Activated CD4-positive, alpha-beta T cell treated with anti-CD3 and anti-CD28 coated beads for 36 hours (primary cell): ENCODE measurements at regions of chr12 and their contacts with region 1.

Region 1: GRCh38 chr12:5083955-5084849 is 40.5 kb downstream of the KCNA5 start:
- DNase-seq: peak; percentile 29
- ATAC-seq: no peak
- H3K4me3 Mint-ChIP-seq: no peak overlapping the region
- H3K27ac Mint-ChIP-seq: no peak overlapping the region
- H3K4me1 Mint-ChIP-seq: no peaks in the 10 kb centered on the region
- H3K27me3 Mint-ChIP-seq: peaks cover 2% of the 10 kb centered on the region

Region 2: GRCh38 chr12:5022465-5023061 is 61.6 kb before region 1 on chr12:
- CTCF ChIA-PET with region 1: interaction called, 14 read pairs
- POLR2A ChIA-PET with region 1: no interaction called
- intact Hi-C with region 1: loop called (anchors 1 kb)
- DNase-seq: peak; percentile 67
- ATAC-seq: peak; percentile 63
- H3K4me3 Mint-ChIP-seq: no peak overlapping the region
- H3K27ac Mint-ChIP-seq: no peak overlapping the region
- H3K4me1 Mint-ChIP-seq: no peaks in the 10 kb centered on the region
- H3K27me3 Mint-ChIP-seq: peaks cover 16% of the 10 kb centered on the region